GM12878 (cell line): ENCODE measurements at regions of chr12 and their contacts with region 1.

Region 1: DNA sequence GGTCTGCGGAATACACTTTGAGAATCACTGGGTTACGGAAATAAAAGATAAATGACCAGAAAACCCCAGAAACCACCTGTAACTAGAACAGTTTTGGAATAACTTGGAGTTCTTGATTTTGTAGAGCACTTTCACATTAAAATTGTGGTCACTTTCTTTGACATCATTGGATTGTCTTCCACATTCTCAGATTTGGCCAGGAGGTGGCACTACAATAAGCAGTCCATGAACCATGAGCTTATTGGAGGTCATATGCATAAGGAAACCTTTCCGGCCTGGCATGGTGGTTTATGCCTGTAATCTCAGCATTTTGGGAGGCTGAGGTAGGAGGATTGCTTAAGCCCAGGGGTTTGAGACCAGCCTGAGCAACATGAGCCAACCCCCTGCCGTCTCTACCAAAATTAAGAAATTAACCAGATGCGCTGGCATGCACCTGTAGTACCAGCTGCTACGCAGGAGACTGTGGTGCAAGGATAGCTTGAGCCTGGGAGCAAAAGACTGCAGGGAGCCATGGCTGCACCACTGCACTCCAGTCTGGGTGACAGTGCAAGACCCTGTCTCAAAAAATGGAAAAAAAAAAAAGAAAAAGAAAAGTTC is 107.7 kb upstream of the CAND1 start:
- DNase-seq: no peak
- ATAC-seq: peak; percentile 82
- H3K4me3 ChIP-seq: no peak overlapping the region
- H3K27ac ChIP-seq: no peak overlapping the region
- H3K4me1 ChIP-seq: no peaks in the 10 kb centered on the region
- H3K27me3 ChIP-seq: no peaks in the 10 kb centered on the region; a peak in 1 of 4 replicates
- CTCF ChIP-seq: peak; percentile 46 to 58 (median 56)
- EP300 ChIP-seq: no peak
- POLR2A ChIP-seq: no peak
- RAD21 ChIP-seq: peak; percentile 59

Region 2: DNA sequence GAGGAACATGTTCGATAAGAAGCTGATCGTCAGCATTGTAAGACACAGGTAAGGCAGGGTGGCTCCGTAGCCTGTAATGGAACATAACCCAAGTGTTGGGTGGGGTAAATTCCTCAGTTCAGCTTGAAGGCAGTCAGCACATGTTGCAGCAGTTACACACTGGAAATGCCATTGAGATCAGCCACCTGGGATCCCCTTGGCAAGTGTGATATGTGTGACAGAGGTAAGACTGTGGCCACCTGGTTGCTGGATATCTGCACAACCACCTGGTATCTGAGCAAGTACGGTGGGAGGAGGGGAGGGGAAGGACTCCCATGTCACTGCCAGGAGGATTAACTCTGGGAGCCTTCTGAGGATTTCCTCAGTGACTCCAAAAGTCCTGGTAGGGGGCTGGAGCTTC is 50.2 kb before region 1 on chr12:
- CTCF ChIA-PET with region 1: no interaction called
- POLR2A ChIA-PET with region 1: no interaction called
- RAD21 ChIA-PET with region 1: no interaction called
- SMC1A ChIA-PET with region 1: no interaction called
- in situ Hi-C with region 1: no loop called
- intact Hi-C with region 1: no loop called
- DNase-seq: no peak
- ATAC-seq: no peak
- H3K4me3 ChIP-seq: no peak overlapping the region
- H3K27ac ChIP-seq: no peak overlapping the region
- H3K4me1 ChIP-seq: no peaks in the 10 kb centered on the region
- H3K27me3 ChIP-seq: no peaks in the 10 kb centered on the region
- CTCF ChIP-seq: no peak
- EP300 ChIP-seq: no peak
- POLR2A ChIP-seq: no peak
- RAD21 ChIP-seq: no peak

Region 3: DNA sequence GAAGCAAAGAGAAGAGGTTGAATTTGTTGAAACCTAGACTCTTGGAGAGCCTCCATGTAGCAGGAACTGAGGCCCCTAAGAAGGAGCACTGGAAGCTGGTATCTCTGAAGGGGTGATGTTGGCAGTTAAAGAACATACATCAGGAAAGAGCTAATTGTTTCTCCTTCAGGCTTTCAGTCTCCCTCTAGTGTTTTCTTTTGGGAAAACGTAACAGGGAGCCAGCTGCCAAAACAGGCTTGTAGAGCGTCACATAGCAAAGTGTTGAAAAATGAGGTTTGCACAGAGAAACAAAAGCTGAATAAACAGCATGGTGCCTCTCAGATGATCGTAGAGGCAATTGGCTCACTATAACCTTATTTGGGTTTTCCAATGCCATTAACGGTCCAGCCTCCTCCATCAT is 60.9 kb after region 1 on chr12:
- CTCF ChIA-PET with region 1: interaction called, 16 read pairs
- POLR2A ChIA-PET with region 1: no interaction called
- RAD21 ChIA-PET with region 1: interaction called, 16 read pairs
- SMC1A ChIA-PET with region 1: interaction called, 4 read pairs
- in situ Hi-C with region 1: no loop called
- intact Hi-C with region 1: loop called (anchors 1 kb)
- DNase-seq: no peak
- ATAC-seq: no peak
- H3K4me3 ChIP-seq: no peak overlapping the region
- H3K27ac ChIP-seq: no peak overlapping the region
- H3K4me1 ChIP-seq: no peaks in the 10 kb centered on the region
- H3K27me3 ChIP-seq: no peaks in the 10 kb centered on the region
- CTCF ChIP-seq: 0 out of 6 replicates have a peak, but pooled peaks of 1 of the 3 experiments have one; percentile 2
- EP300 ChIP-seq: no peak
- POLR2A ChIP-seq: no peak
- RAD21 ChIP-seq: no peak

Region 4: DNA sequence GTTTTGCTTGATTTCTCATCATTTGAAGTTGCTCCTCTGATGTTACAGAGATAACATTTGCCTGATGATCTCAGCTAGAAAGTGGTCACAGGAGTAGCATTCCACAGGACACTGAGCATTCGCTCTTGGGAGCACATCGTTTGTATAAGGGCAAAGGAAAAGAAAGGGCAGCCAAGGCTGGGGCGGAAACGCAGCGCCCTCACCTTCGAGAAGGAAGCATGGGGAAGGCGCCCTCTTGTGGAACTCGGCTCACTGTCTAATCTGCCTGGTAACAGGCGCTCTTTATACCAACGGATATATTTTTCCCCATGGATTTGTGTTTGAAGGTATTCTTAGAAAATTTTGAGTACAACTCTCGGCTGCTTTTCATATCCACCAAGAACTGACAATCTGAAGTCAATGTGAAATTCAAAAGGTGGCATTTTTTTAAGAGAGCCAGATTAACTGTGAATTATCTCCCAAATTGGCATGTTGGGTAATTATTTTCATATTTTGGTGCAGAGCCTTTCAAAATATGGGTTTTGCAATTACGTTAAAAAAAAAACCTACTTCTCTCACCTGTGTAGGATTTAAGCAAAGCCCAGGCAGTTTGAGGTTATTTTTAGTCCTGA is 280.4 kb after region 1 on chr12:
- CTCF ChIA-PET with region 1: interaction called, 11 read pairs
- POLR2A ChIA-PET with region 1: no interaction called
- RAD21 ChIA-PET with region 1: no interaction called
- SMC1A ChIA-PET with region 1: interaction called, 5 read pairs
- in situ Hi-C with region 1: no loop called
- intact Hi-C with region 1: loop called (anchors 5 kb)
- DNase-seq: no peak
- ATAC-seq: peak; percentile 98
- H3K4me3 ChIP-seq: no peak overlapping the region
- H3K27ac ChIP-seq: no peak overlapping the region
- H3K4me1 ChIP-seq: peaks cover 8% of the 10 kb centered on the region; the same call in 1 of the 2 replicates
- H3K27me3 ChIP-seq: no peaks in the 10 kb centered on the region; a peak in 1 of 4 replicates
- CTCF ChIP-seq: peak; percentile 68 to 82 (median 76)
- EP300 ChIP-seq: no peak
- POLR2A ChIP-seq: no peak
- RAD21 ChIP-seq: peak; percentile 77